Ascending aorta (tissue), 2 donors: ENCODE measurements at regions of chr7 and their contacts with region 1.

Region 1: GRCh38 chr7:16645593-16646471 is at the starts of genes ANKMY2 and BZW2:
- DNase-seq: peak; percentile 85 to 97
- H3K4me3 ChIP-seq: peak within 1 kb of the TSS; percentile 81 to 96
- H3K27ac ChIP-seq: peak within 1 kb of the TSS; percentile 83 to 88
- H3K4me1 ChIP-seq: peaks cover 0 to 20% of the 10 kb centered on the region in 2 donors
- H3K27me3 ChIP-seq: no peaks in the 10 kb centered on the region
- CTCF ChIP-seq: no peak
- total RNA-seq, gene ANKMY2: 11.2 TPM
- total RNA-seq, gene BZW2: 18.0 TPM

Region 2: DNA sequence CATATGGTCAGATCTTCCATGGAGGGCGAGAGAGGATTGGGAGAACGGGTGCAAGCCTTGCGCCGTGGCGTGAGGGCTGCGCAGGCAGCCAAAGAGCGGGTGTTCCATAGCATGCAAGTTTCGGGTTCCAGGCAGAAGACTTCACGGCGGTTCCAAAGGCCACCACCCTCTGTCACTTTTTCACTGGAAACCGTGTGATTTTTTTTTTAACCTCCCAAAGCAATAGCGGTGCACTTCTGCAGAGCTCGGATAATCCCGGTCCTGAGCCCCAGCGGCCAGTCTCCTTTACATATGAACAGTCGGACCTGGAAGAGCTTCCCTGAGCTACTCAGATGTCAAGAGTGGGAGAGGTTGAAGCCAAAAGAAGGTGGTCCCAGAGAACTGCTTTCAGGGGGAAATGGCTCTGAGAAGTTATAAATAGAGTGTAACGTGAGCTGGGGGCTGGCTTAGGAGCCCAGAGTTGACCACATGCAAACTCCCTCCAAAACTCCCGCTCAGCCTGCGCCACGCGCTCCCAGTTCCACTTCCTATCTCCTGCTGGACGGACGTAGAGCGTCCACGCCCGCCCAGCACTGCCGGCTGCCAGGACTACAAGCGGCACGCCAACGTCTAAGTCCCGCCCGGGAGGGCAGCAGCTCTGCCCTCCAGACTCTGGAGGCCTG is 959.4 kb before region 1 on chr7 and contains the start of gene MEOX2:
- intact Hi-C with region 1: loop called (anchors 2 kb)
- DNase-seq: peak; percentile 28 to 80
- H3K4me3 ChIP-seq: peak within 1 kb of the TSS; percentile 59 to 66
- H3K27ac ChIP-seq: peak within 1 kb of the TSS; percentile 75 to 83
- H3K4me1 ChIP-seq: no peaks in the 10 kb centered on the region
- H3K27me3 ChIP-seq: no peaks in the 10 kb centered on the region
- CTCF ChIP-seq: no peak
- total RNA-seq, gene MEOX2: 35.0 TPM

Region 3: DNA sequence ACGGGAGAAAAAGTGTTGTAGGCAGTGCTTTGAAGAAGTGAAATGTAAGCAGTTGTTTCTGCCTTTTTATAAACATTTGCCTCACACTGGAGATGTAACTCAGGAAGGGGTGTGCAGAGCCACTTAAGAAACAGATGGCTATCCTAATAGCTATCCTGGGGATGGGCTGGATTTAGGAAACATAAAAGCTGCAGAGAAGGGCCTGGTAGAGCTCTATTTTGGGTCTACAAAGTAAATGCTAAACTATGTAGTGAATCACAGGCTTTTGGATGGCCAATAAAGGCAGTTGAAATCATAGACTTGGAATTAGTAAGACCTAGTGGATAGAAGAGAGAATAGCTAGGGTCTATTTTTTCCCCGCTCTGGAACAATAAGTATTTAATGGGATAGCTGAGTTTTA is 315.8 kb after region 1 on chr7:
- intact Hi-C with region 1: loop called (anchors 5 kb)
- DNase-seq: no peak
- H3K4me3 ChIP-seq: no peak overlapping the region
- H3K27ac ChIP-seq: peak overlapping the region; percentile 45 to 77
- H3K4me1 ChIP-seq: peaks cover 0 to 12% of the 10 kb centered on the region in 2 donors
- H3K27me3 ChIP-seq: no peaks in the 10 kb centered on the region
- CTCF ChIP-seq: no peak

Region 4: GRCh38 chr7:17940302-17940883 is 1294.6 kb after region 1 on chr7 and contains the start of gene SNX13:
- intact Hi-C with region 1: loop called (anchors 5 kb)
- DNase-seq: peak; percentile 74 to 95
- H3K4me3 ChIP-seq: peak within 1 kb of the TSS; percentile 85 to 98
- H3K27ac ChIP-seq: peak within 1 kb of the TSS; percentile 95 to 99
- H3K4me1 ChIP-seq: peaks cover 0 to 27% of the 10 kb centered on the region in 2 donors
- H3K27me3 ChIP-seq: no peaks in the 10 kb centered on the region
- CTCF ChIP-seq: peak in 2 of 3 experiments; percentile 21 to 35
- total RNA-seq, gene SNX13: 26.2 TPM